ENCODE measurements at regions of chr3 and their contacts with region 1.

Region 1: DNA sequence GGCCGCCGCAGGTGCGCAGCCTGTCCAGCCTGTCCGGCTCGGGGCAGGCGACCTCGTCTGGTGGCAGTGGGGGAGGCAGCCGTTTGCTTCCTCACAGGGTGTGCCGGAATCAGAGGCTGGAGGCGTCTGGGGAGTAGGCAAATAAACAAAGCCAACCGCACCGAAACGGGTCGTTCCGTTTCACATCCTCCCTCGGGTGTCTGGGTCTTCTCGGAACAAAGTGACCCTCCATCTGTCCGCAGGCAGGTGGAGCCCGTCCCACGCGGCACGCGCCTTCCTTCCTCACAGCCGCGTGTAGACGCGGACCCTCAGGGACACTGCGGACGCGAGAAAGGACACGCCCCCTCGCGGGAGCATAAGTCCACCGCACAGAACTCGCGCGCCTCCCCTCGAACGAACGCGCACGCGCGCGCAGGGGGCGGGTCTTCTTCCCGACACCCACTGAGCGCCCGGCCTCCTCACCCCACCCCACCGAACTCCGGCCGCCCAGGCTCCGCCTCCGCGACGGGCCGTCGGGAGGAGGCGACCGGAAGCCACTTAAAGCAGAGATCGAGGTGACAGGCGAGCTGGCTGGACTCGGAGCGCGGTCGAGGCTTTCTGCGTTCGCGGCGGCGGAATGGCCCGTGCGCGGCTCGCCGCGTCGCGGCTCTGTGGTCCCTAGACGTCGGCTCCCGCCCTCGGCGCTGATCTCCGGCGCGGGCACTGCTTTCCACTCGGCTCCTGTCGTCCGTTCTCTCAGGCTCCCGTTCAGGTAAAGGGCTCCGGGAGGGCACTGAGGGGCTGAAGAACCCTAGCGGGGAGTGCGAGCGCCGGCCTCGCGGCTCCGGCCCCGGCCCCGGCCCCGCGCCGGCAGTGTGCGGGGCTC is at the start of gene TIPARP:
- DNase-seq: peak; percentile 100
- ATAC-seq: peak; percentile 81
- H3K4me3 ChIP-seq: peak within 1 kb of the TSS; percentile 80 to 96 (median 81)
- H3K4me3 Mint-ChIP-seq: peak within 1 kb of the TSS; percentile 91
- H3K27ac ChIP-seq: peak within 1 kb of the TSS; percentile 86 to 94
- H3K27ac Mint-ChIP-seq: peak within 1 kb of the TSS; percentile 99
- H3K4me1 ChIP-seq: peaks cover 25 to 30% of the 10 kb centered on the region in 2 donors
- H3K4me1 Mint-ChIP-seq: peaks cover 47% of the 10 kb centered on the region
- H3K27me3 ChIP-seq: no peaks in the 10 kb centered on the region
- H3K27me3 Mint-ChIP-seq: no peaks in the 10 kb centered on the region
- CTCF ChIP-seq: peak; percentile 83
- total RNA-seq, gene TIPARP: 40.9 and 42.5 TPM in 2 replicates

Region 2: GRCh38 chr3:156151824-156152428 is 522.4 kb before region 1 on chr3:
- CTCF ChIA-PET with region 1: interaction called, 8 read pairs
- POLR2A ChIA-PET with region 1: no interaction called
- intact Hi-C with region 1: loop called (anchors 1 kb)
- DNase-seq: peak; percentile 47
- ATAC-seq: peak; percentile 28
- H3K4me3 ChIP-seq: no peak overlapping the region
- H3K4me3 Mint-ChIP-seq: no peak overlapping the region
- H3K27ac ChIP-seq: no peak overlapping the region
- H3K27ac Mint-ChIP-seq: no peak overlapping the region
- H3K4me1 ChIP-seq: no peaks in the 10 kb centered on the region
- H3K4me1 Mint-ChIP-seq: peaks cover 7% of the 10 kb centered on the region
- H3K27me3 ChIP-seq: peaks cover 0 to 1% (median 0%) of the 10 kb centered on the region in 4 experiments
- H3K27me3 Mint-ChIP-seq: peaks cover 15% of the 10 kb centered on the region
- CTCF ChIP-seq: peak; percentile 76

Region 3: GRCh38 chr3:156554842-156555687 is 119.2 kb before region 1 on chr3 and contains the start of gene SSR3:
- CTCF ChIA-PET with region 1: interaction called, 30 read pairs
- POLR2A ChIA-PET with region 1: interaction called, 16 read pairs
- intact Hi-C with region 1: loop called (anchors 1 kb)
- DNase-seq: peak; percentile 99
- ATAC-seq: peak; percentile 99
- H3K4me3 ChIP-seq: peak within 1 kb of the TSS; percentile 83 to 97 (median 90)
- H3K4me3 Mint-ChIP-seq: peak within 1 kb of the TSS; percentile 97
- H3K27ac ChIP-seq: peak within 1 kb of the TSS; percentile 19 to 86
- H3K27ac Mint-ChIP-seq: peak within 1 kb of the TSS; percentile 94
- H3K4me1 ChIP-seq: peaks cover 14 to 16% of the 10 kb centered on the region in 2 donors
- H3K4me1 Mint-ChIP-seq: peaks cover 38% of the 10 kb centered on the region
- H3K27me3 ChIP-seq: no peaks in the 10 kb centered on the region
- H3K27me3 Mint-ChIP-seq: no peaks in the 10 kb centered on the region
- CTCF ChIP-seq: no peak
- total RNA-seq, gene SSR3: 63.1 and 69.2 TPM in 2 replicates

Region 4: GRCh38 chr3:156787926-156788663 is 113.8 kb after region 1 on chr3:
- CTCF ChIA-PET with region 1: no interaction called
- POLR2A ChIA-PET with region 1: no interaction called
- intact Hi-C with region 1: no loop called
- DNase-seq: no peak
- ATAC-seq: no peak
- H3K4me3 ChIP-seq: no peak overlapping the region
- H3K4me3 Mint-ChIP-seq: no peak overlapping the region
- H3K27ac ChIP-seq: no peak overlapping the region
- H3K27ac Mint-ChIP-seq: no peak overlapping the region
- H3K4me1 ChIP-seq: no peaks in the 10 kb centered on the region
- H3K4me1 Mint-ChIP-seq: peaks cover 3% of the 10 kb centered on the region
- H3K27me3 ChIP-seq: no peaks in the 10 kb centered on the region
- H3K27me3 Mint-ChIP-seq: no peaks in the 10 kb centered on the region
- CTCF ChIP-seq: no peak

Region 5: DNA sequence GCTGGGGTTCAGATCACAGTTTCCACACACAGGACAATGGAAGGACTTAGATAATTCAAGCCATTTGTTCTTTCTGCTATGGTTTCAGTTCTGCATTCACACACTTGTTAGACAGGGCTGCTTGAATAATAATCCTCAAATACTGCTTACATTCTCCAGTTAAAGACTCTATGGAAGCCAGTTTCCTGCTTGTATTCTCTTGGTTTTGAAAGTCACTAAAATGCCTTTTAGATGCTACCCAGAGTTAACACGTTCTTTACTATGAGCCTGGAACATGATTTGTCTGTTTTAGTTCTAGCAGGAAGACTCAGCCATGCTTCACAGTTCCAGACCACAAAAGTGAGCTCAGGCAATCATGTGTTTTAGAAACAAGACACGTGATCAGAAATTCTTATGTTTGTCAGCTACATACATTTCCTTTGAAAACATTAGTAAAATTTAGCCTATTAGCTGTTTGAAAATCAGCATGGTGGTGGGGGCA is 304.2 kb after region 1 on chr3:
- CTCF ChIA-PET with region 1: interaction called, 7 read pairs
- POLR2A ChIA-PET with region 1: interaction called, 4 read pairs
- intact Hi-C with region 1: loop called (anchors 1 kb)
- DNase-seq: peak; percentile 87
- ATAC-seq: peak; percentile 86
- H3K4me3 ChIP-seq: peak overlapping the region in 3 of 5 experiments; percentile 0 to 53 (median 5)
- H3K4me3 Mint-ChIP-seq: peak overlapping the region; percentile 74
- H3K27ac ChIP-seq: peak overlapping the region; percentile 74 to 93
- H3K27ac Mint-ChIP-seq: peak overlapping the region; percentile 97
- H3K4me1 ChIP-seq: peaks cover 36 to 43% of the 10 kb centered on the region in 2 donors
- H3K4me1 Mint-ChIP-seq: peaks cover 51% of the 10 kb centered on the region
- H3K27me3 ChIP-seq: no peaks in the 10 kb centered on the region
- H3K27me3 Mint-ChIP-seq: no peaks in the 10 kb centered on the region
- CTCF ChIP-seq: no peak

Region 6: DNA sequence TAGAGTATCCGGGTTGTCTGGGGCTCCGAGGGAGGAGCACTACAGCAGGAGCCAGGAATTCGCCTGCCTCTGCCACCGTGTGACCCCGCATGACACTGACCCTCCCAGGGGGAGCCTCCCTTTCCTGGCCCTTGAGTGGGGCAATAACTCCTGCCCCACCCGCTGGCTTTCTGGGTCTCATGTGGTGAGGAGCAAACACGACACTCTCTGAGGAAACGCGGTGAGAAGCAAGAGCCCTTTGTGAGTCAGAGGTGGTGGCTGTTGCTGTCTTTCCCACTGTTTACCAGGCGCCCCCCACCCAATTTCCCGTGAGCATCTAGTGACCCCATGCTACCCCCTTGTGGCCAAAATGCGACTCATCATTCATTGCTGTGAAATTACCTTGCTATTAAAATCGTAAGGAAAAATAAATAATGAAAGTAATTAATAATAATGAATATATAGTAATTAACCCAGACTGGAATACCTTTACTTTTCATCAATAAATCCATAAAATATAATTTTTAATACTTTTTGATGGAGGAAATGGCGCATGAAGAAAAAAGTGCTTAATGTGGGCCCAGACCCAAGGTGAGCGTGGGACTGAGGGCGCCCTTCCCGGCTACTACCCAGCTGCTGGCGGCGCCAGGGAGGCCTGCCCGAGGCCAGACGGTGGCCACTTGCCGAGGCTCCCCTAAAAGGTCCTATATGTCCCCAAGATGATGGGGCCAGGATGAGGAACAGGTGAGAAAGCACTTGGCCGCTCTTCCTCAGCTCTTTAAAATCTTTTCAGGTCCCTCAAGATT is 456.4 kb after region 1 on chr3:
- CTCF ChIA-PET with region 1: interaction called, 4 read pairs
- POLR2A ChIA-PET with region 1: no interaction called
- intact Hi-C with region 1: loop called (anchors 1 kb)
- DNase-seq: peak; percentile 42
- ATAC-seq: no peak
- H3K4me3 ChIP-seq: no peak overlapping the region
- H3K4me3 Mint-ChIP-seq: peak overlapping the region; percentile 10
- H3K27ac ChIP-seq: no peak overlapping the region
- H3K27ac Mint-ChIP-seq: no peak overlapping the region
- H3K4me1 ChIP-seq: peaks cover 3 to 29% of the 10 kb centered on the region in 2 donors
- H3K4me1 Mint-ChIP-seq: peaks cover 25% of the 10 kb centered on the region
- H3K27me3 ChIP-seq: no peaks in the 10 kb centered on the region
- H3K27me3 Mint-ChIP-seq: no peaks in the 10 kb centered on the region
- CTCF ChIP-seq: peak; percentile 63

Region 7: GRCh38 chr3:158644345-158644908 is 1970.1 kb after region 1 on chr3 and contains the start of gene GFM1:
- CTCF ChIA-PET with region 1: no interaction called
- POLR2A ChIA-PET with region 1: no interaction called
- intact Hi-C with region 1: loop called (anchors 5 kb)
- DNase-seq: peak; percentile 94
- ATAC-seq: peak; percentile 96
- H3K4me3 ChIP-seq: peak within 1 kb of the TSS; percentile 75 to 96 (median 91)
- H3K4me3 Mint-ChIP-seq: peak within 1 kb of the TSS; percentile 99
- H3K27ac ChIP-seq: peak within 1 kb of the TSS; percentile 63 to 85
- H3K27ac Mint-ChIP-seq: peak within 1 kb of the TSS; percentile 78
- H3K4me1 ChIP-seq: peaks cover 4 to 11% of the 10 kb centered on the region in 2 donors
- H3K4me1 Mint-ChIP-seq: peaks cover 22% of the 10 kb centered on the region
- H3K27me3 ChIP-seq: no peaks in the 10 kb centered on the region
- H3K27me3 Mint-ChIP-seq: no peaks in the 10 kb centered on the region
- CTCF ChIP-seq: peak; percentile 84
- total RNA-seq, gene GFM1: 46.0 and 46.8 TPM in 2 replicates